Transverse colon (tissue), 4 donors: ENCODE measurements at regions of chr15 and their contacts with region 1.

Region 1: DNA sequence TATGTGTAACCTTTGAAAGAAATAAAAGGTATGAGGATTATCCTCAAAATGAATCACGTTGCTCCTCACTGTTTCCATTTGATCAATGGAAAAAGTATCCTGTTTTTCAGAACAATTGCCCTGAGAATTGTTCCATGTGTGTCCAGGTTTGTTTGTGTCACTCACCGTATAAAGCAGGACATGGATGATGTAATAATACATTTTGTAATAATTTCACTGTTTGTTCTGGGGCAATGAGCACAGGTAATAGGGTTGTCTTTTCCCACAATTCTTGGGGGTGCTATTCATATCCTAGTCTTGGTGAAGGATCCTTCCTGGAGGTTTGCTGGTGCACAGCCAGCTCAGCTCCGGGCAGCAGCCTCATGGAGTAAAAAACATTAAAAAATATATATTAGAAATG is 510.8 kb upstream of the MCTP2 start:
- DNase-seq: no peak
- H3K4me3 ChIP-seq: no peak overlapping the region
- H3K27ac ChIP-seq: no peak overlapping the region
- H3K4me1 ChIP-seq: no peaks in the 10 kb centered on the region
- H3K27me3 ChIP-seq: no peaks in the 10 kb centered on the region
- CTCF ChIP-seq: no peak
- EP300 ChIP-seq: no peak
- POLR2A ChIP-seq: no peak

Region 2: DNA sequence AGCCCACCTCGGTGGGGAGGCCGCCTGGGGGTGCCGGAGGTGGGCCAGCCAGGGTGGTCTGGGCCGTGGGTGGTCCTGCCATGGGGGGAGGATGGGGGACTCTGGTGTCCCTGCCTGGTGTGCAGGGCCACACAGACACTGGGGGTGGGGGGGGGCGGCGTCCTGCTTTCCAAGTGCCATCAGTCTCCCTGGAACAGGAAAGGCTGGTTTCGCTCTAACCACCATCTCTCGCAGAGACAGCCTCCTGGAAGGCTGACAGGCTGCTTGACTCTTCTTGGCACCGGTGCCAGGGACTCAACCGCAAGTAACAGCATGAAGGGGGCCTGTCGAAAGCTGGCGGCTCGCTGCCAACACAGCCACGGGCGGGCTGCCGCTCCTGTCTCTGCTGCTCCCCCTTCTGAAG is 671.8 kb before region 1 on chr15:
- in situ Hi-C with region 1: no loop called
- intact Hi-C with region 1: no loop called
- DNase-seq: peak; percentile 43
- H3K4me3 ChIP-seq: no peak overlapping the region
- H3K27ac ChIP-seq: peak overlapping the region in 3 of 4 donors; percentile 20 to 59 (median 32)
- H3K4me1 ChIP-seq: peaks cover 0 to 8% (median 3%) of the 10 kb centered on the region in 4 donors
- H3K27me3 ChIP-seq: no peaks in the 10 kb centered on the region
- CTCF ChIP-seq: no peak
- EP300 ChIP-seq: no peak
- POLR2A ChIP-seq: no peak

Region 3: GRCh38 chr15:93730724-93731123 is 10.1 kb after region 1 on chr15:
- in situ Hi-C with region 1: no loop called
- intact Hi-C with region 1: loop called (anchors 1 kb)
- DNase-seq: no peak
- H3K4me3 ChIP-seq: no peak overlapping the region
- H3K27ac ChIP-seq: no peak overlapping the region
- H3K4me1 ChIP-seq: no peaks in the 10 kb centered on the region
- H3K27me3 ChIP-seq: no peaks in the 10 kb centered on the region
- CTCF ChIP-seq: no peak
- EP300 ChIP-seq: no peak
- POLR2A ChIP-seq: no peak